ENCODE measurements at regions of chr9 and their contacts with region 1.

Region 1: GRCh38 chr9:125241000-125241862 is at the start of gene HSPA5:
- DNase-seq: peak; percentile 99 to 100 (median 99)
- H3K4me3 ChIP-seq: peak within 1 kb of the TSS; percentile 92 to 100
- H3K4me3 Mint-ChIP-seq: peak within 1 kb of the TSS; percentile 92 to 99 (median 98)
- H3K27ac ChIP-seq: peak within 1 kb of the TSS; percentile 97
- H3K27ac Mint-ChIP-seq: peak within 1 kb of the TSS; percentile 97 to 100 (median 100)
- H3K4me1 ChIP-seq: peaks cover 50% of the 10 kb centered on the region
- H3K4me1 Mint-ChIP-seq: peaks cover 30 to 60% (median 42%) of the 10 kb centered on the region in 4 donors
- H3K27me3 ChIP-seq: no peaks in the 10 kb centered on the region
- H3K27me3 Mint-ChIP-seq: peaks cover 0 to 3% of the 10 kb centered on the region in 2 donors
- total RNA-seq, gene HSPA5: 147 to 154 TPM

Region 2: GRCh38 chr9:123929870-123930831 is 1311.1 kb before region 1 on chr9 and contains the start of gene DENND1A:
- CTCF ChIA-PET with region 1: no interaction called
- POLR2A ChIA-PET with region 1: no interaction called
- intact Hi-C with region 1: loop called (anchors 10 kb)
- DNase-seq: peak; percentile 80 to 85 (median 84)
- H3K4me3 ChIP-seq: peak within 1 kb of the TSS; percentile 21 to 63
- H3K4me3 Mint-ChIP-seq: peak within 1 kb of the TSS; percentile 87 to 97 (median 92)
- H3K27ac ChIP-seq: peak within 1 kb of the TSS; percentile 35
- H3K27ac Mint-ChIP-seq: peak within 1 kb of the TSS; percentile 82 to 92 (median 88)
- H3K4me1 ChIP-seq: peaks cover 25% of the 10 kb centered on the region
- H3K4me1 Mint-ChIP-seq: peaks cover 25 to 32% (median 30%) of the 10 kb centered on the region in 4 donors
- H3K27me3 ChIP-seq: no peaks in the 10 kb centered on the region
- H3K27me3 Mint-ChIP-seq: peaks cover 0 to 2% of the 10 kb centered on the region in 2 donors
- total RNA-seq, gene DENND1A: 14.2 TPM

Region 3: DNA sequence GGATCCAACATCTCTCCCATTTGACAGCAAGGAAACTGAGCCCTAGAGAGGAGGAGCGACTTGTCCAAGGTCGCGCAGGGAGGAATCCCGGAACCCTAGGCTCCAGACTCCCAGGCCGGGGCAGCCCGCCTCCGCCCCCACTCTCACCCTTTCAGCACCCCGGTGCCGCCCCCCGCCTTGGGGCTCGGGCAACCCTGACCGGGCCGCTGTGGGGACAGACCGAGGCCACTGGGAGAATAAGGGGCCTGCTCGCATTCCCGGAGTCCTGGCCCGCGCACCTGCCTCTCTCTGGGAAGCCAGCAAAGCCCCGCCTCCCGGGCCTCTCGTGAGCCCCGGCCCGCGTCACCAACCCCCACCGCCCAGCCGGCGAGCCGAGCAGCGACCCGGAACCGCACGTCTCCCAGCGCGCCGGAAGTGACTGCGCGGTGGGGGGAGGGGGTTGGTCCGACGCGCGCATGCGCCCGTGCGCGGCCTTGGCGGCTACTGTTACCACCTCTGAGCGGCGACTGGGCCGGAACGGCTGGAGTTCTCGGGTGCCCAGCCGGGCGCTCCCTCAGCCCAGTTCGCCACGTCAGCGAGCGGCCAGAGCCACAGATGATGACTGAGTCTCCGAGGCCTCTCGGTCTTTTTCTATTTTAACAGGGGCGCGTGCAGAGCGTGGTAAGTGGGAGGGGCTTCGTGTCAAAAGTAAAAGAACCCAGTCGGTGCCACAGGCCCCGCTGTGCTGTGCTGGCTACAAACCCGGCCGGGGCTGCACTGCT is 300.4 kb before region 1 on chr9 and contains the start of gene GOLGA1:
- CTCF ChIA-PET with region 1: interaction called, 3 read pairs
- POLR2A ChIA-PET with region 1: interaction called, 14 read pairs
- intact Hi-C with region 1: loop called (anchors 2 kb)
- DNase-seq: peak; percentile 93 to 95 (median 94)
- H3K4me3 ChIP-seq: peak within 1 kb of the TSS; percentile 94 to 99
- H3K4me3 Mint-ChIP-seq: peak within 1 kb of the TSS; percentile 91 to 97 (median 96)
- H3K27ac ChIP-seq: peak within 1 kb of the TSS; percentile 96
- H3K27ac Mint-ChIP-seq: peak within 1 kb of the TSS; percentile 86 to 99 (median 97)
- H3K4me1 ChIP-seq: peaks cover 18% of the 10 kb centered on the region
- H3K4me1 Mint-ChIP-seq: peaks cover 13 to 35% (median 27%) of the 10 kb centered on the region in 4 donors
- H3K27me3 ChIP-seq: no peaks in the 10 kb centered on the region
- H3K27me3 Mint-ChIP-seq: no peaks in the 10 kb centered on the region
- total RNA-seq, gene GOLGA1: 27.3 to 38.3 TPM

Region 4: DNA sequence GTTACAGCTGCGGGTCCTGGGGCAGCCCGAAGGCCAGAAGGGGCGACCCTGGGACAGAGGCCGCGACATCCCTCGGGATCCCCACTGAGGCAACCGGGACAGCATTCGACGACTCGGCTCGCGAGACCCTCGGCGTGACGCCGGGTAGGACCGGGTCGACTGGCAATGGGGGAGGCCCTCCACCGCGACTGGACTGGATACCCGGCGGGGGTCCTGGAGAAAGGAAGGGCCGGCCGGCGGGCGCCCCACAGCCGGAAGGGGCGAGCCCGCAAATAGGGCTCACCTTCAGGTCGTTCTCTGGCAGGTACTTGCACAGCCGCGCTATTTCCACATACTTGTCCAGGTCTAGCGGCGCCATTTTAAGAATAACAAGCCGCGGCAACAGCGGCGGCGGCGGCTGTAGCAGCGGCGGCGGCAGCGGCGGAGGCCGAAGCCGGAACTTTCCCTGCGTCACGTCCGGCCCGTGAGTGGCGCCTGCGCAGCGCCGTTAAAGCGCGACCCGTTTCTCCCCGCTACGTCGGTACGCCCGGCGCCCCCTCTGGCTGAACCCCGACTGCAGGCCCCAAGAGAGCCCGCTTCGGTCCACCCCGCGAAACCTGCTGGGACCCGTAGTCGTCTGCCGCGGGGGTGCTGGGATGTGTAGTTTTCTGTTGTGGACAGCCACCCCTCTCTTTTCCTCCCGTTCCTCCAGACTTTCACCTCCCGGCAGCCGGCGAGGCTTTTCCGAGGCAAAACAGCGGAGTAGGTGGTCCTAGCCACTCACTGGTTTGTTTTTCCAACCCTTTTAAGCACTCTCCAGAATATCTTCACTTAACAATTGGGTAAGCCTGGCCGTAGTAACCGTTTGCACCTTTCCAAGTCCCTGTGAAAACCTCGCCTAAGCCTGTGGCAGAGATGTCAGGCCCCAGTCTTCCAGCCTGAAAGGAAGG is 51.6 kb before region 1 on chr9 and contains the start of gene PPP6C:
- CTCF ChIA-PET with region 1: interaction called, 10 read pairs
- POLR2A ChIA-PET with region 1: interaction called, 61 read pairs
- intact Hi-C with region 1: loop called (anchors 1 kb)
- DNase-seq: peak; percentile 95 to 98 (median 96)
- H3K4me3 ChIP-seq: peak within 1 kb of the TSS; percentile 84 to 100
- H3K4me3 Mint-ChIP-seq: peak within 1 kb of the TSS; percentile 89 to 98 (median 94)
- H3K27ac ChIP-seq: peak within 1 kb of the TSS; percentile 97
- H3K27ac Mint-ChIP-seq: peak within 1 kb of the TSS; percentile 89 to 97 (median 94)
- H3K4me1 ChIP-seq: peaks cover 81% of the 10 kb centered on the region
- H3K4me1 Mint-ChIP-seq: peaks cover 20 to 75% (median 48%) of the 10 kb centered on the region in 4 donors
- H3K27me3 ChIP-seq: no peaks in the 10 kb centered on the region
- H3K27me3 Mint-ChIP-seq: no peaks in the 10 kb centered on the region
- total RNA-seq, gene PPP6C: 49.2 TPM

Region 5: GRCh38 chr9:125227761-125228160 is 13.5 kb before region 1 on chr9:
- CTCF ChIA-PET with region 1: no interaction called
- POLR2A ChIA-PET with region 1: interaction called, 12 read pairs
- intact Hi-C with region 1: no loop called
- DNase-seq: no peak
- H3K4me3 ChIP-seq: no peak overlapping the region
- H3K4me3 Mint-ChIP-seq: no peak overlapping the region
- H3K27ac ChIP-seq: no peak overlapping the region
- H3K27ac Mint-ChIP-seq: peak overlapping the region in 1 of 7 donors; percentile 57
- H3K4me1 ChIP-seq: no peaks in the 10 kb centered on the region
- H3K4me1 Mint-ChIP-seq: no peaks in the 10 kb centered on the region
- H3K27me3 ChIP-seq: no peaks in the 10 kb centered on the region
- H3K27me3 Mint-ChIP-seq: no peaks in the 10 kb centered on the region

Region 6: DNA sequence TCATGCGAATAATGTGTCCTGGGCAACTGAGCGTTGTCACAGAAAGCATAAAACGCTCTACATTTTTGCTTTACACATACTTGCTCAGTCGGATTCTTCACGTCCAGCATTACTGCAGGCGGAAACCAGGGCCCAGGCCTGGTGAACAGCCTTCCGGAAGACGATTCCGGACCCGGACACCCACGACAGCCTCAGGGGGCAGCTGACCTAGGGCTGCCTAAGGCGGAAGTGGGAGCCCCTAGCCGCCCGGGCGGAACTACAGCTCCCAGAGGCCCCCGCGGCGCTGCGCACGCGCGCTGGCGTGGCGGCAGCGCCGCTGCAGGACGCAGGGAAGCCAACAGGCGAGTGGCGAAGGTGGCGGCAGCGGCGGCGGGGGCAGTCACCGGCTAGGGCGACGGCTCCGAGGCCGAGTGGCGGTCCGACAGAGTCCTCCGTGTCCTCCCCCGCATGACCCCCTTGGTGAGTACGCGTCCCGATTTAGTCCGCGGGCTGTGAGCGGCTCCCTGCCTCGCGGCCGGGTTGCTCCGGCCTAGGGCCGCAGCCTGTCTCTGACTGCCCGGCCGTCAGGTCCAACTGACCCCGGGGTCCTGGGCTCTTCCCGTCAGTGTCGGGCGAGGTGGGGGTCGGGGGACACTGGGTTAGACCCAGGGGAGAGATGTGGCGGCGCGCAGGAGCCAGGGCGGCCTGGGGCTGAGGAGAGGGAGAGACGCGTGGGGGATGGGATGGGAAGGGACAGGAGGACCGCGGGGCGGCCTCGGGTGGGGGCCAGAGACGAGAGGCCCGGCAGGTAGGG is 20.5 kb after region 1 on chr9 and contains the start of gene GAPVD1:
- CTCF ChIA-PET with region 1: interaction called, 17 read pairs
- POLR2A ChIA-PET with region 1: interaction called, 98 read pairs
- intact Hi-C with region 1: loop called (anchors 1 kb)
- DNase-seq: peak; percentile 86 to 91 (median 87)
- H3K4me3 ChIP-seq: peak within 1 kb of the TSS; percentile 72 to 94
- H3K4me3 Mint-ChIP-seq: peak within 1 kb of the TSS; percentile 94 to 98 (median 97)
- H3K27ac ChIP-seq: peak within 1 kb of the TSS; percentile 81
- H3K27ac Mint-ChIP-seq: peak within 1 kb of the TSS; percentile 87 to 98 (median 97)
- H3K4me1 ChIP-seq: peaks cover 33% of the 10 kb centered on the region
- H3K4me1 Mint-ChIP-seq: peaks cover 28 to 53% (median 40%) of the 10 kb centered on the region in 4 donors
- H3K27me3 ChIP-seq: no peaks in the 10 kb centered on the region
- H3K27me3 Mint-ChIP-seq: no peaks in the 10 kb centered on the region
- total RNA-seq, gene GAPVD1: 67.8 to 76.4 TPM

Region 7: DNA sequence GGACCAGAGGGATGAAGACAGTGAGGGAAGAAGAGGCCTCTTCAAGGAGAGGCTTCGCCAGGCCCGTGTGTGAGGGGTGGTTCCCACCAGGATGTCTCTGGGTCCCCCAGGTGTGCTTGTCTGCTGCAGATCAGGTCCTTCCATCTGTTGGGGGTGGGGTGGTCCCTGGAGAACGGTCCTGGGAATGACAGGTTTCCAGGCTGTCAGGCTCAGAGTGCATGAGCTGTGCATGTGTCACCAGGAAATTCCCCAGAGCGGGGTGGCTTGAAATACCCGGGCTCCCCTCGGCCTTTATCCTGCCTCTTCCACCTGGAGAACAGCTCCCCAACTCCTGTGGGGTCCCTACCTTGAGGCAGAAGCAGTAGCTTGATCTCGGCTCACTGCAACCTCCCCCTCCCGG is 139.2 kb after region 1 on chr9:
- CTCF ChIA-PET with region 1: no interaction called
- POLR2A ChIA-PET with region 1: no interaction called
- intact Hi-C with region 1: no loop called
- DNase-seq: no peak
- H3K4me3 ChIP-seq: no peak overlapping the region
- H3K4me3 Mint-ChIP-seq: no peak overlapping the region
- H3K27ac ChIP-seq: no peak overlapping the region
- H3K27ac Mint-ChIP-seq: no peak overlapping the region
- H3K4me1 ChIP-seq: no peaks in the 10 kb centered on the region
- H3K4me1 Mint-ChIP-seq: no peaks in the 10 kb centered on the region
- H3K27me3 ChIP-seq: no peaks in the 10 kb centered on the region
- H3K27me3 Mint-ChIP-seq: peaks cover 5 to 9% of the 10 kb centered on the region in 2 donors

Region 8: DNA sequence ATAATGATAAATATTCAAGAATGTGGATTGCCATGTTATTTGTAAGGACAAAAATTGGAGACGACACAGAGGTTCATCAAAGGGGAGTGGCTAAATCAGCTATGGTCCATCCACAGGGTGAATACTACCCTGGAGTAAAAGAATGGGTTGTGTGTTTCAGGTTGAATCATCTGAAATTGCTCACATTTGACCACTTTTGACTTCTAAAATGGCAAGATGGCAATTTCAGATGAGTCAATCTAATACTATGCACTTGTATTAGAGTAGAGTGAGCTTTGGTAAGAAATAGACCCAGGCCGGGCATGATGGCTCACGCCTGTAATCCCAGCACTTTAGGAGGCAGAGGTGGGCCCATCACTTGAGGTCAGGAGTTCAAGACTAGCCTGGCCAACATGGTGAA is 152.2 kb after region 1 on chr9:
- CTCF ChIA-PET with region 1: no interaction called
- POLR2A ChIA-PET with region 1: no interaction called
- intact Hi-C with region 1: no loop called
- DNase-seq: no peak
- H3K4me3 ChIP-seq: no peak overlapping the region
- H3K4me3 Mint-ChIP-seq: no peak overlapping the region
- H3K27ac ChIP-seq: no peak overlapping the region
- H3K27ac Mint-ChIP-seq: no peak overlapping the region
- H3K4me1 ChIP-seq: no peaks in the 10 kb centered on the region
- H3K4me1 Mint-ChIP-seq: no peaks in the 10 kb centered on the region
- H3K27me3 ChIP-seq: no peaks in the 10 kb centered on the region
- H3K27me3 Mint-ChIP-seq: peaks cover 2% of the 10 kb centered on the region in 2 donors